Heart left ventricle (tissue), 16 donors: ENCODE measurements at regions of chrX and their contacts with region 1.

Region 1: GRCh38 chrX:43703211-43703791 is 47.2 kb downstream of the MAOA start:
- DNase-seq: no peak
- ATAC-seq: peak; percentile 34 to 55 (median 40)
- H3K4me3 ChIP-seq: no peak overlapping the region
- H3K27ac ChIP-seq: peak overlapping the region; percentile 1 to 94 (median 74)
- H3K4me1 ChIP-seq: peaks cover 0 to 63% (median 18%) of the 10 kb centered on the region in 12 donors
- H3K27me3 ChIP-seq: no peaks in the 10 kb centered on the region
- CTCF ChIP-seq: no peak
- POLR2A ChIP-seq: no peak

Region 2: DNA sequence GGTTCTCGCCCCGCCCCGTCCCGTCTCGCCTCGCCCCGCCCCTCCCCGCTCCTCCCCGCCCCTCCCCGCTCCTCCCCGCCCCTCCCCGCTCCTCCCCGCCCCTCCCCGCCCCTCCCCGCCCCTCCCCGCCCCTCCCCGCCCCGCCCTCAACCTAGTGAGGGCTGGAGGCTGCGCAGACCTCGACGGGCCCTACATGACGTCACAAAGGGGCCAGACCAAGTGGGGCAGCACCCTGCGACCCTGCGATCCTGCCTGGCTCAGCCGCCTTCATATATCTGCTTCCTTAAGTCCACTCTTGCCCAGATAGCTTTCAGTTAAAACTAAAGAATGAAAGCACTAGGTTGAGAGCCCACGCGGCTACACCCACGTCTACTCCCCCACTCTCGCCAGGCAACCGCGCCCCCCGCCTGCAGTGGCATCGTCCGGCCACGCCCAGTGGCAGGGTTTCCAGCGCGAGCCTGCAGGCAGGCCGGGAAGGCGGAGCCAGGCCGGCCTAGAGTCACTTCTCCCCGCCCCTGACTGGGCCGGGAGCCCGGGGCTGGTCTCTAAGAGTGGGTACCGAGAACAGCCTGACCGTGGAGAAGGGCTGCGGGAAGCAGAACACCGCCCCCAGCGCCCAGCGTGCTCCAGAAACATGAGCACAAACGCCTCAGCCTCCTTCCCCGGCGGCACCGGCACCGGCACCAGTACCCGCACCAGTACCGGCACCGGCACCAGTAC is 48.7 kb before region 1 on chrX:
- intact Hi-C with region 1: loop called in 9 of 10 experiments (anchors 1 to 10 kb)
- DNase-seq: peak; percentile 91 to 95 (median 94)
- ATAC-seq: peak; percentile 94 to 98 (median 97)
- H3K4me3 ChIP-seq: peak overlapping the region; percentile 43 to 98 (median 76)
- H3K27ac ChIP-seq: peak overlapping the region; percentile 81 to 95 (median 88)
- H3K4me1 ChIP-seq: peaks cover 0 to 6% (median 0%) of the 10 kb centered on the region in 12 donors
- H3K27me3 ChIP-seq: peaks cover 0 to 17% (median 0%) of the 10 kb centered on the region in 9 donors
- CTCF ChIP-seq: peak in 10 of 12 donors; percentile 11 to 53 (median 31)
- POLR2A ChIP-seq: peak in 1 of 2 donors; percentile 95

Region 3: DNA sequence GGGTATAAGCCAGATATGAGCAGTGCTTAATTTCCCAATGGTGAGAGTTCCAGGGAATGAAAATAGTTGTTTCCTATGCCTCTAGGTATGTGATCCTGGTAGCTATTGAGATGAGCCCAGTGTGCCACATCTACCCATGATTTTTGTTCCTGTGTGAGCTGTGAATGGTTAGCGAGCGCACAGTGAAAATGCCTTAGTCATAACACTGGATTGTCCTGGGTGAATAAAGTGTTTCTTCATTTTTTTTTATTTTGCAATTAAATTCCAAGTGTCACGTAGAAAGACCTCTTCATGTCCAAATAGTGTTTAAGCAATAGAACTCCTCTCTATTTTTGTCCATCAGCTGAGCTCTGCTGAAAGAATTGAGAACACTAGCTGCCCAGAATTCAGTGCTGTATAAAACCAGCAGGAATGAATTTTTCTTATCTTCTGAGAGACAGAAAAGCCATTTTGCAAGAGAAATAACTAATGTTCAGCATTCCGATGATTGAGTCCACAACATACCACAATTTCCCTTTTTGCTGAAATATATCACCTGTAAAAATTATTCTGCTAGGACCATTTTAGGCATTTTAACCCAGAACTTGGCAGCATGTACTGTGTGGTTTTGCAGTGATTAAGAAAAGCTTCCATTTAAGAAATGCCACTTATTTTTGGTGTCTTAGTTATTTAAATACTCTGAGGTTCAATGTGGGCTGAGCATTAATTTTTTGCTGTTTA is 41.6 kb before region 1 on chrX:
- intact Hi-C with region 1: loop called in 6 of 10 experiments (anchors 5 to 10 kb)
- DNase-seq: no peak
- ATAC-seq: peak; percentile 30 to 55 (median 46)
- H3K4me3 ChIP-seq: peak overlapping the region in 2 of 12 donors; percentile 16
- H3K27ac ChIP-seq: peak overlapping the region in 6 of 12 donors; percentile 39 to 70 (median 44)
- H3K4me1 ChIP-seq: peaks cover 0 to 14% (median 0%) of the 10 kb centered on the region in 12 donors
- H3K27me3 ChIP-seq: peaks cover 0 to 34% (median 0%) of the 10 kb centered on the region in 9 donors
- CTCF ChIP-seq: no peak
- POLR2A ChIP-seq: no peak